ENCODE measurements at regions of chr18 and their contacts with region 1.

Region 1: DNA sequence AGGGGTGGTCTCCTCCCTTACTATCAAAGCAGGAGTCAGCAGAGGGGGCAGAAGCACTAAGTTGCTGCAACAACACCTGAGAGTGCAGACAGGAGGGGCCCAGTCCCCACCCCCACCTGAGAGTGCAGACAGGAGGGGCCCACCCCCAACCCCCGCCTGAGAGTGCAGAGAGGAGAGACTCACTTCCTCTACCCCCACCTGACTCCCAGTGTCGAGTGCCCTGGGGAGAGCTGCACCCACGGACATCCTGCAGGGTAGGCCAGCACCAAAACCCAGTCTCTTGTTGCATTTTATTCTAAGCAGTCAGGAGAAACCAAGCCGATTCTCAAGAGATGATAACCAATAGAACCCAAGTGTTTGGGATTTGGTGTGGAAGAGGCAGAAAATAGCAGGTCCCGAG is 78.4 kb downstream of the NAPG start:
- DNase-seq: no peak
- H3K4me3 ChIP-seq: no peak overlapping the region
- H3K27ac ChIP-seq: no peak overlapping the region
- H3K4me1 ChIP-seq: no peaks in the 10 kb centered on the region
- H3K27me3 ChIP-seq: no peaks in the 10 kb centered on the region
- CTCF ChIP-seq: no peak
- EP300 ChIP-seq: no peak
- POLR2A ChIP-seq: no peak

Region 2: DNA sequence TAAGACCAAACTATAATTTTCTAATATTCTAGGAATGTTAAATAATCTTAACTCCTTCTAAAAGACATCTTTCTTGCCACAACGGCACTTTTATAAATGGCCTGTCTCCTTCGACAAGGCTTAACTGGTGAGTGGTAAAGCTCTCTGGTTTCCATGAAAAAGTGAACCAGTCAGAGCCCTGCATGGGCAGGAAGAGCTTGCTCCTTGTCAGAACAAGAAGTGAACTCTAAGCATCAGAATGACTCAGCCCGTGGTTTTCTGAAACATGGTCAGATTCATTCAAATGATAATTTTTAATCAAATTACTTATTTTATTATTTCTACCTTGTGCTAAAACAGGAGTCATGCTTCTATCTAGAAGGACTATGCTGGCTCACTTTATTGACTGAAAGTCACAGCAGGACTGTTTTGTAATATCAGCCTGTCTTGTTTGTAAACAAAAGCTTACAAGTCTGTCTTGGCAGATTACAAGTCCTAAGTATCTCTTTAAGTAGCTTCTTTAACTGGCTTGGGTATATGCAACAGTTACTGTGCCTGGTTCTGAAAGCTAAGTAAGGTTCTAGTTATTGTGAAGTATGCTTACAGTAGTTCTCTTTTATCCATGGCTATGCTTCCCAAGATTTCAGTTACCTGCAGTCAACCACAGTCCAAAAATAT is 167.0 kb after region 1 on chr18:
- in situ Hi-C with region 1: no loop called
- intact Hi-C with region 1: no loop called
- DNase-seq: no peak
- H3K4me3 ChIP-seq: no peak overlapping the region
- H3K27ac ChIP-seq: no peak overlapping the region
- H3K4me1 ChIP-seq: no peaks in the 10 kb centered on the region
- H3K27me3 ChIP-seq: no peaks in the 10 kb centered on the region
- CTCF ChIP-seq: no peak
- EP300 ChIP-seq: no peak
- POLR2A ChIP-seq: no peak

Region 3: DNA sequence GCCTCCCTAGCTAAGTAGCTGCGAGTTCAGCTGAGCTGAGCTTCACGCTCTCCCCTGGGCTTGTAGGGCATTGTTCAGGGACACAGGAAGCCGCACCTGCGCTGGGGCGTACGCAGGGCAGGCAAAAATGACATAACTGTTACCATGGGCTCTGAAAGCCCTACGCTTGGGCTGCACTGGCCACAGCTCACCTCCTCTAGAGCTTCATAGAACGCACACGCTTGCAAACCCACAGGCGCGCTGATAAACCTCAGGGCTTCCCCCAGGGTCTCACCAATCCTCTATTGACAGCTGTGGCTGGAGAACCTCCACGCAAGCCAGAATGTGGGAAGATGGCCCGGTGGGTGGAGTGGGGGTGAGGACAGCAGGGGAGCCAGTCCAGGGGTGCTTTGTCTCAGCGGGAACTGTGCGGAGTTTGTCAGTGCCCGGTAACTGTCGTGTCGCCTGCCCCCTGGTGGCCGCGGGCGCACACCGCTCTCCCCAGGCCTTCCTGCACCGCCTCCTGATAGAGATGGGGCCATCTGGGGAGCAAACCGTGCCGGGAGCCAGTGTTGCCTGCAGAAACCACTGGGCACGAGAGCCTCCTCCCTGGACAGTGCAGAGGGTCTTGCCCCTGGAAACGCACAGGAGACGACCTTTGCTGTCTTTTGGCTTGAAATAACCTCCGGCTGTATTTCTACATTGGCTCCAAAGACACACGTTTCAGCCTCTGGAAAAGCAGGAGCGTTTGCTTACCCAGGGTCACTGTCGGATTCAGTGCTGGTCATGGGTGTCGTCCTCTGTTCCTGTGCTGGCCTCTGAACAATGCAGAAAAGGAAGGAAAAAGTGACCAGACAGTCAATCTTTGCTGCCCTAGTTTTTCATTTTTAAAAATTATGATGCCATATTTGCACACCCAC is 1633.0 kb after region 1 on chr18:
- in situ Hi-C with region 1: loop called in 2 of 4 experiments (anchors 10 to 25 kb)
- intact Hi-C with region 1: no loop called
- DNase-seq: peak; percentile 74
- H3K4me3 ChIP-seq: no peak overlapping the region
- H3K27ac ChIP-seq: no peak overlapping the region
- H3K4me1 ChIP-seq: no peaks in the 10 kb centered on the region
- H3K27me3 ChIP-seq: no peaks in the 10 kb centered on the region
- CTCF ChIP-seq: peak; percentile 74 to 93 (median 89)
- EP300 ChIP-seq: no peak
- POLR2A ChIP-seq: no peak